AG04449 (cell line): ENCODE measurements at regions of chr3 and their contacts with region 1.

Region 1: GRCh38 chr3:48674505-48674904 is 11.2 kb downstream of the NCKIPSD start:
- DNase-seq: no peak
- H3K4me3 ChIP-seq: no peak overlapping the region
- CTCF ChIP-seq: no peak

Region 2: DNA sequence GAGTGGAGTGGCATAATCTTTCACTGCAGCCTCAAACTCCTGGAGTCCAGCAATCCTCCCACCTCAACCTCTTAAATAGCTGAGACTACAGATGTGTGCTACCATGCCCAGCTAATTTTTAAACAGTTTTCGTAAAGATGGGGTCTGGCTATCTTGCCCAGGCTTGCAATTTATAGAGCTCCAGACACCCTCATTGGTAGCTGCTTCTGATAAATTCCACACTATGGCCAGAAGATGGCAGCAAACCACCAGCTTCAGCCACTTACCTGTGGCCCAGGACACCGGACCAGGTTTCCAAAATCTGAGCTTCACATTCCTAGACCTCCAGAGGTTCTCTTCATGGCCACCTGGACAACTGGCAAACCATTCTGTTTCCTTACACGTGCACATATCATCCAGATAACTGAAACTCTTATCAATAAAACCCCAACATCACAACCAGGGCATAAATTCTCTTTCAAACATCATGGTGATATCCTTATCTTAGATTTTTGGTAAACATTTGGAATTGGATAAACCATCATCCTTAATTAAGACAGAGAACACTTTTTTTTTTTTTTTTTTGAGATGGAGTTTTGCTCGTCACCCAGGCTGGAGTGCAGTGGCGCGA is 273.6 kb before region 1 on chr3:
- CTCF ChIA-PET with region 1: no interaction called
- POLR2A ChIA-PET with region 1: no interaction called
- DNase-seq: no peak
- H3K4me3 ChIP-seq: no peak overlapping the region
- CTCF ChIP-seq: peak; percentile 64

Region 3: DNA sequence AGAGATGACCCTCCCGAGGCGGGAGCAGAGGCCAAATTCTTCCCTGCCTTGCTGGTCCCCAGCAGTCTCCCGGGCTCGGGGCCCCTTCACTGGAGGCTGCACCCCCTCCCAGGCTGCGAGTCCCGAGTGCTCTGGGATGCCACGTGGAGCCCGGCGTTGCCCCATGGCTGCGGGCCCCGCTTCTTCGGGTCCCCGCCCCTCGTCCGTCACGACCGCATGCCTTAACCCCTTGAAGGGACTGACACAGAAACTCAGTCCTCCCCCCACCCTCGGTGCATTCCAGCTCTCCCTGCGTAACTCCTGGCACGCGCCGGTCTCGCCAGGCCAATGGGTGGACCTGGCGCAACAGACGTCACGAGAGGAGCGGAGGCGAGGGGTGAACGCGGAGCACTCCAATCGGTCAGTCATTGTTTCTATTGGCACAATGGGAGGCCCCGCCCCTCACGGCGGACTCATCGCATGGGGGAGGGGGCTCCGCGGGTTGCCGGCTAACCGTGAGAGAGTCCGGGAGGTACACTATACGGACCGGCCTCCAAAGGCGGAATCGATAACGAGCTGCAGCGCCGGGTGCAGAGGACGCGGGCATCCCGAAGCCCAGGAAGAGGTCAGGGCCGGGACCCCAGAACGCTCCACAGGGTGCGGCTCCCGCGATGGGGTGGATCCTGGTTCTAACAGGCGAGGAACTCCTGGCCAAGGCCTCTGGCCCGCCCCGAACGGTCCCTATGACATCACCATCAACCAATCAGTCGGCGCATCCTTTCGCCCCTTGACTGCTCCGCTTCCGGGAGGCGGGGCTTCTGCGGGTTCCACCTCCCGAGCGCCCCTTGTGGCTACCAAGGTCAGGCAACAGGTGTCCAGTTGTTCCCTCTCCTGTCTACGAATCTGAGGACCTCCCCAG is 10.8 kb before region 1 on chr3:
- CTCF ChIA-PET with region 1: interaction called, 16 read pairs
- POLR2A ChIA-PET with region 1: interaction called, 3 read pairs
- DNase-seq: peak; percentile 92
- H3K4me3 ChIP-seq: peak overlapping the region; percentile 70
- CTCF ChIP-seq: peak; percentile 80